ENCODE measurements at regions of chr2 and their contacts with region 1.

Region 1: DNA sequence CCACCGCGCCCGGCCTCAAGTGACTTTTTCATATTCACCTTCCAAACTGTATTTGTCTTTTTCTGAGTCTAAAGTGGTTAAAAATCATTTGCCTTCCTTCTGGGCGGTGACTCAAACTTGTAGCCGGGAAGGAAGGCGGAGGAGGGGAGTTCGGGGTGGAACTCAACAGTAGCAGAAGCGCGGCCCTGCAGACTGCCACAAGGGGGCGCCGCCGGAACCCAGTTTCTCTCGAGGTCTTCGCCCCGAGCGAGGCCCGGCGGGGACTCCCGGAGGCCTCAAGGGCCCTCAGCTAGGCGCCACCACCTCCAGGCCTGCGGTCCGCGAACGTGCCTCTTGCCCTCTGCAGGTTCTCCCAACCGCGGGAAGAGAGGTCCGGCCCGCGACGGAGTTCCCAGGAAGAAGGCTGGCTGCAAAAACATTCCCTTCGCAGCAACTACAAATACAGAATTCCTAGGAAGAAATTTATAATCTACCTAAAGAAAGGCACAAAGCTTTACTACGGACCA is 16.8 kb upstream of the ITM2C start:
- DNase-seq: peak; percentile 90 to 97
- ATAC-seq: peak; percentile 87

Region 2: GRCh38 chr2:229927817-229928321 is 920.1 kb before region 1 on chr2:
- intact Hi-C with region 1: no loop called
- DNase-seq: no peak
- ATAC-seq: no peak

Region 3: DNA sequence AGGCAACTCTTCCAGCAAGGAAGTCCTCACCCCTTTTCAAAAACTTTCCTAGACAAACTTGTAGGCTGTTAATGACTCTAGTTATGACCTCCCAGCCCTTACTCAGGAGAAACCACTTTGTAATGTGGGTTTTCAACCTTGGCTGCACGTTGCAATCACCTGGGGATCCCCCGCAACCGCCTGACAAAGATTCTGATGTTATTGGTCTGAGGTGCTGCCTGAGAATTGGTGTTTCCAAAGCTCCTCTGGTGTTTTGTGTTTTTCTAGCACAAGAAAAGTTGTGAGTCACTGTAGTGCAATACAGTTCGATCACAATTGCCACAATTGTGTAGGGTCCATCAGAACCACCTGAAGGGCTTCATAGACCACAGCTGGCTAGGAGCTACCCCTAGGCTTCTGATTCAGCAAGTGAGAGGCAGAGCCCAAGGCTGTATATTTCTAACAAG is 310.4 kb before region 1 on chr2:
- intact Hi-C with region 1: no loop called
- DNase-seq: no peak
- ATAC-seq: no peak

Region 4: GRCh38 chr2:230762317-230762896 is 85.5 kb before region 1 on chr2:
- intact Hi-C with region 1: no loop called
- DNase-seq: peak in 1 of 2 donors; percentile 28
- ATAC-seq: peak; percentile 86

Region 5: GRCh38 chr2:230913406-230914143 is 65.6 kb after region 1 on chr2:
- intact Hi-C with region 1: loop called in 1 of 2 experiments (anchors 10 kb)
- DNase-seq: peak; percentile 57 to 70
- ATAC-seq: peak; percentile 87

Region 6: GRCh38 chr2:230968921-230969658 is 121.2 kb after region 1 on chr2:
- intact Hi-C with region 1: no loop called
- DNase-seq: no peak
- ATAC-seq: no peak

Region 7: GRCh38 chr2:230981704-230982103 is 133.8 kb after region 1 on chr2:
- intact Hi-C with region 1: loop called in 1 of 2 experiments (anchors 5 kb)
- DNase-seq: no peak
- ATAC-seq: peak; percentile 75